ENCODE measurements at regions of chr4 and their contacts with region 1.

Region 1: GRCh38 chr4:55345980-55346850 is at the start of gene SRD5A3:
- DNase-seq: peak; percentile 64 to 80
- ATAC-seq: peak; percentile 97 to 98
- H3K4me3 ChIP-seq: peak within 1 kb of the TSS; percentile 47
- H3K27ac ChIP-seq: peak within 1 kb of the TSS; percentile 94 to 99
- H3K4me1 ChIP-seq: peaks cover 10% of the 10 kb centered on the region; the same call in 1 of the 3 replicates
- CTCF ChIP-seq: peak; percentile 84
- EP300 ChIP-seq: no peak
- POLR2A ChIP-seq: peak; percentile 88
- RAD21 ChIP-seq: peak; percentile 47 to 70
- polyA plus RNA-seq, gene SRD5A3: 11.1 and 14.1 TPM in 2 replicates

Region 2: DNA sequence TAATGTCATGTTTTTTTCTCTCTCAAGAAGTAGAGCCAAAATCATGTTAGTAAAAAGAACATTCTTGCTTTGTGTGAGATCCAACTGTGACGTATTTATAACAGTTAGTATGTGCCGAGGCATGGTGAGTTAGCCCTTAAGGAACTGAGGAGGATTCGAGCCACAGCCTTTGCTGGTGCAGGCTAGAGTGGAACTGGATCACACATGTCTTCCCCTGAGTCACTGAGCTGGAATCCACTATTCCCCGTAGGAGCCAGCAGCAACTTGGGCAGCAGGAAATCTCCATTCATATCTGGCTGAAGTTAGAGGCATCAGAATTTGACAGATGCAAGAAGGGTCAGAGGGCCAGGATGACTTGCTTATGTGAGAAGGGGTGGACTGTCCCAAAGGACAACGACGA is 833.0 kb before region 1 on chr4:
- CTCF ChIA-PET with region 1: no interaction called
- POLR2A ChIA-PET with region 1: no interaction called
- DNase-seq: no peak
- ATAC-seq: no peak
- H3K4me3 ChIP-seq: no peak overlapping the region
- H3K27ac ChIP-seq: no peak overlapping the region
- H3K4me1 ChIP-seq: no peaks in the 10 kb centered on the region
- CTCF ChIP-seq: no peak
- EP300 ChIP-seq: no peak
- POLR2A ChIP-seq: no peak
- RAD21 ChIP-seq: no peak

Region 3: GRCh38 chr4:55082756-55083155 is 263.5 kb before region 1 on chr4:
- CTCF ChIA-PET with region 1: no interaction called
- POLR2A ChIA-PET with region 1: no interaction called
- DNase-seq: no peak
- ATAC-seq: no peak
- H3K4me3 ChIP-seq: no peak overlapping the region
- H3K27ac ChIP-seq: no peak overlapping the region
- H3K4me1 ChIP-seq: no peaks in the 10 kb centered on the region
- CTCF ChIP-seq: no peak
- EP300 ChIP-seq: no peak
- POLR2A ChIP-seq: no peak
- RAD21 ChIP-seq: no peak

Region 4: GRCh38 chr4:55272589-55272988 is 73.6 kb before region 1 on chr4:
- CTCF ChIA-PET with region 1: no interaction called
- POLR2A ChIA-PET with region 1: no interaction called
- DNase-seq: no peak
- ATAC-seq: no peak
- H3K4me3 ChIP-seq: no peak overlapping the region
- H3K27ac ChIP-seq: no peak overlapping the region
- H3K4me1 ChIP-seq: no peaks in the 10 kb centered on the region
- CTCF ChIP-seq: no peak
- EP300 ChIP-seq: no peak
- POLR2A ChIP-seq: no peak
- RAD21 ChIP-seq: no peak

Region 5: DNA sequence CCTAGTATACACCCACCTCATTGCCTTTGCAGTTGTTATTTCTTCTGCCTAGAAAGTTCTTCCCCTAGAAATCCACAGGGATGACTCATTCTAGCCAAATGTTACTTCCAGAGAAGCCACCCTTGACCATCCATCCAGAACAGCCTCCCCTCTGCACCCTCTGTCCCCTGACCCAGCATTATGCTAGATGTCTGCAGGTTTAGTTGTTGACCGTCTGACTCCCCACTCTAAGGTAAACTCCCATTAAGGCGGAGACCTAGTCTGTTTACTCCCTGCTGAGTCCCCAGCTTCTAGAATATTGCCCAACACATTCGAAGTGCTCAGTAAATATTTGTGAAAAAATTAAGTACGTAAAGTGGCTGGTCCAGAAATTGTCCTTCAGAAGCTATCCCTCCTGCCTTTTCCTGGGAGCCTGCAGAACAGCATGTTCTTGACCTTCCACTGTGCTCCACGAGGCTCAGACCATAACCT is 10.8 kb after region 1 on chr4:
- CTCF ChIA-PET with region 1: interaction called, 17 read pairs
- POLR2A ChIA-PET with region 1: no interaction called
- DNase-seq: peak in 1 of 2 experiments; percentile 20
- ATAC-seq: peak; percentile 30 to 45; a peak in 3 of 6 replicates
- H3K4me3 ChIP-seq: no peak overlapping the region
- H3K27ac ChIP-seq: no peak overlapping the region; a peak in 1 of 6 replicates
- H3K4me1 ChIP-seq: peaks cover 21% of the 10 kb centered on the region
- CTCF ChIP-seq: no peak
- EP300 ChIP-seq: no peak
- POLR2A ChIP-seq: no peak
- RAD21 ChIP-seq: no peak

Measured in A549 (cell line).